ENCODE measurements at regions of chr9 and their contacts with region 1.

Region 1: DNA sequence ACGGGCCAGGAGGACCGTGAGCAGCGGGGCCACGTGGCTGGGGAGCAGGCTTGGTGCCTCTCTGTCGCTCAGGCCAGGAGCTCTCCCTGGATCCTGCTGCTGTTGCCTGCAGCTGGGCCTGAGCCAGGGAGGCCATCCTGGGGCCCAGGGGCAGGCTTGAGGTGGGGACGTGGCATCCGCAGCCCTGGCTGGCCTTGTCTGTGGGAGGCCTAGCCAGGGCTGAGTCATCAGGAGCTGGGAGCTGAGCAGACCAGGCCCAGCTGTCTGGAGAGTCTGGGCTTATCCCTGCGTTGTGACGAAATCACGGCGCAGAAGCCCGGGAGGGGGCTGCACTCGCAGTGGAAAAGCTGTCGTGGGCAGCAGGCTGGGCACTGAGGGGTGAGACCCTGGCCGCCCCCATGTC is 138.8 kb upstream of the COL5A1 start:
- DNase-seq: peak; percentile 96
- H3K4me3 ChIP-seq: no peak overlapping the region
- CTCF ChIP-seq: no peak

Region 2: DNA sequence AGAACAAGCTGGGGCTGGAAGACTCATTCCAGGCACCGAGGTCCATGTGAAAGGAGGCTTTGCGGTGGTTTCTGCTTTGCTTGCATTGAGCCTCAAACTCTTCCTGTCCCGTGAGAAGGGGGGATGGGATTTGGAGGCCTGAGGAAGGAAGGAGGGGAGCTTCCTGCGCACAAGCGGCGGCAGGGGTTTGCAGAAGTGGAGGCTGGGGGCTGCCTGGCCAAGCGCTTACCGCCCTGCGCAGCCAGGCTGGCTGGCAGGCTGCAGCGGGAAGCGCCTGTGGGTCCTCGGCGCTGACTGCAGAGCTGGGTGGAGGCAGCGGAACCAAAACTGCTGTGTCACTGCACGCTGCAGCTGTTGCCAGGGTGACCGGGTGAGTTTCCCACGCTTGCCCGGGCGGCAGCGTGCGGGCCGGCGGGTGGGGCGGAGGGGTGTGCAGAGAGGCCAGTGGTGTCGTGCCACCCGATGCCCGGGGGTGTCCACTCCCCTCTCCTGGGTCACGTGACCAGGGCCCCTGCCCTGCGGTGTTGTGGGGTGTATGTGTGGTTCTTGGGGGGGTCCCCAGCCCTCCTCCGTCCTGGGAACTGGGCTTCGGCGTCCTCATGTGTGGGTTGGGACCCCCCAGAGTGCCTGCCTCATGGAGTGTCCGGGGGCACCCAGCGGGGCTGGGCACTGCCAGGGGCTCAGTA is 95.5 kb before region 1 on chr9:
- CTCF ChIA-PET with region 1: no interaction called
- POLR2A ChIA-PET with region 1: no interaction called
- DNase-seq: peak; percentile 47
- H3K4me3 ChIP-seq: peak overlapping the region; percentile 38
- CTCF ChIP-seq: no peak

Region 3: DNA sequence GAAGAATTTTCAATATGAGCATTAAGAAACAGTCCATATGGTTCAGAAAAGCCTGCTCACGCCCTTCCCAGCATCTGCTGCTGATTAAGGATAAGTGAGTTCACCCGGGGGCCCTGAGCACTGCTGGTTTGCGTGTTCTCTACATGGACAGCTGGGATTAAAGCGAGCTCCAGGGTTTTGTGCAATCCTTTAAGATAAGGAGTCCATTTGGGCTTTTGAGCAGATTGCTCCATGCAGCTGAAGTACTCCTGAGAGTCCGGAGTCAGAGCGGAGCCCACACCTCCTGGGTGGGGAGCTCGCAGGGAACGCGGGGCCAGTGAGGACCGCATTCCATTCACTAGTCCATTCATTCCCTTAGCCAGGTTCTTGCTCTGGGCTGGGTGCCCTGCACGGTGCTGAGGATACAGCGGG is 10.5 kb before region 1 on chr9:
- CTCF ChIA-PET with region 1: interaction called, 5 read pairs
- POLR2A ChIA-PET with region 1: interaction called, 20 read pairs
- DNase-seq: peak; percentile 84
- H3K4me3 ChIP-seq: no peak overlapping the region
- CTCF ChIP-seq: no peak